GM12878 (cell line): ENCODE measurements at regions of chr5 and their contacts with region 1.

Region 1: DNA sequence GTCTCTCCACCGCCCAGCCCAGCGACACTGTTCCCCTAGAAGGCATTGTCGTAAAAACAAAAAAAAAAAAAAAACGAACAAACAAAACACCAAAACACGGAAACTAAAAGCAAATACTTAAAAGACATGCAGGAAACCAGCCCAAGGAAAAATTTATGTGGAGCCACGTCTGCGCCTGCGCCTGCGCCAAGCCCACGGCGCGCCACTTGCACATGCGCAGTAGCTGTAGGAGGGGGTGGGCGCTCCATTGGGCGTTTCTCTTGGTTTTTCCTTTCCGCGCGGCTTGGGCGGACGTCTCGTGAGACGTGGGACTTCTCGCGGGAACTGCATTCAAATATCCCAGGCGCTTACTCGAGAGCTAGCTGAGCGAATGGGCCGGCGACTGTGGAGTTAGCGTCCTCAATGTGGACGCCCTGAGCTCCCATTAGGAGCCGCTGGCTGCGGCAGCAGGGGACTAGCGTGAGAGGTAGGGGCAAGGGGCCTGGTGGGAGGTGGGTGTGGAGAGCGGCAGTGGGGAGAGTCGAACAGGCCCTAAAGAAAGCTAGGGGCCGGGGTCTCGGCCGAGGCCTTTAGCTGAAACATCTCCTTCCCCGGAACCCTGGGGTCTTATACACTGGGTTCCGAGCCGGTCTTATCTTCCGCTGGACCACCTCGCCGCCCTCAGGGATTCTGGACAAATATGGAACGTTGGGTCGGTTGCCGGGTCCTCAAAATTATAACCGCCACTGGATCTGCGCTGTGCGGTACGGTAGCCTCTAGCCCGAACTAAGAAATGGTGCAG is at the start of gene SPDL1:
- DNase-seq: peak; percentile 89
- ATAC-seq: peak; percentile 94
- H3K4me3 ChIP-seq: peak within 1 kb of the TSS; percentile 90
- H3K27ac ChIP-seq: peak within 1 kb of the TSS; percentile 88
- H3K4me1 ChIP-seq: no peaks in the 10 kb centered on the region; the same call in 1 of the 2 replicates
- H3K27me3 ChIP-seq: no peaks in the 10 kb centered on the region
- CTCF ChIP-seq: no peak
- EP300 ChIP-seq: no peak
- POLR2A ChIP-seq: peak; percentile 94
- RAD21 ChIP-seq: no peak
- polyA plus RNA-seq, gene SPDL1: 36.6 to 40.4 TPM

Region 2: DNA sequence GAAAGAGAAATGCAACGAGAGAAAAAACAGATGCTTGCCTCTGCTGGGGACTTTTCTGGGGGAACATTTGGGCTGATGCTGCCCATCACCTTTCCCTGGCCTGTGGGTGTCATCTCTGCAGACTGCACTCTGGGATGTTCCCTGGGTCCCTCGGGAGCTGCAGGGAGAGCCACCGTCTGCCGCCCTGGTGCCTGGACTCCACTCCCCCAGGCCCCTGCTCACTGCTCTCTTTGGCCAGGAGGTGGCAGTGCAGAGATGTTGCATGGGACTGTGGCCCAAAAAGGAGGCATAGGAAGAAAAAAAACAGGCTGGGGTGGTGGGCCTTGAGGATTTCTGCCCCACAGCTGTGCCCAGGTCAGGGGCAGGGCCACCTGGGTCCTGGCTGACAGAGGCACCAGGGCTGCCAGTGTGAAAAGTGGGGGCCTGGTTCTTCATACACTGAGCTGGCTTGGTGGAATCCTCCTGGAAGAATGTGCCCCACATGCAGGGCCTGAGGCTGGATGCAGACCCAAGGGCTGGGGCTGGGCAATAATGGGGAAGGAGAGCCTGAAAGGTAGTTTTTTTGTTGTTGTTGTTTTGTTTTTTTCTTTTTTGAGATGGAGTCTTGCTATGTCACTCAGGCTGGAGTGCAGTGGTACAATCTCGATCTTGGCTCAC is 636.3 kb before region 1 on chr5:
- CTCF ChIA-PET with region 1: interaction called, 6 read pairs
- POLR2A ChIA-PET with region 1: no interaction called
- RAD21 ChIA-PET with region 1: no interaction called
- SMC1A ChIA-PET with region 1: interaction called, 5 read pairs
- in situ Hi-C with region 1: no loop called
- intact Hi-C with region 1: loop called (anchors 1 kb)
- DNase-seq: no peak
- ATAC-seq: peak; percentile 89
- H3K4me3 ChIP-seq: no peak overlapping the region
- H3K27ac ChIP-seq: no peak overlapping the region
- H3K4me1 ChIP-seq: no peaks in the 10 kb centered on the region
- H3K27me3 ChIP-seq: no peaks in the 10 kb centered on the region
- CTCF ChIP-seq: peak; percentile 74 to 90 (median 84)
- EP300 ChIP-seq: no peak
- POLR2A ChIP-seq: no peak
- RAD21 ChIP-seq: peak; percentile 74

Region 3: GRCh38 chr5:169265888-169266287 is 317.7 kb before region 1 on chr5:
- CTCF ChIA-PET with region 1: interaction called, 3 read pairs
- POLR2A ChIA-PET with region 1: no interaction called
- RAD21 ChIA-PET with region 1: no interaction called
- SMC1A ChIA-PET with region 1: no interaction called
- in situ Hi-C with region 1: no loop called
- intact Hi-C with region 1: loop called (anchors 2 kb)
- DNase-seq: no peak
- ATAC-seq: no peak
- H3K4me3 ChIP-seq: no peak overlapping the region
- H3K27ac ChIP-seq: no peak overlapping the region
- H3K4me1 ChIP-seq: no peaks in the 10 kb centered on the region
- H3K27me3 ChIP-seq: no peaks in the 10 kb centered on the region; a peak in 1 of 4 replicates
- CTCF ChIP-seq: peak in 2 of 3 experiments; percentile 2 to 16; a peak in 2 of 6 replicates
- EP300 ChIP-seq: no peak
- POLR2A ChIP-seq: no peak
- RAD21 ChIP-seq: no peak

Region 4: DNA sequence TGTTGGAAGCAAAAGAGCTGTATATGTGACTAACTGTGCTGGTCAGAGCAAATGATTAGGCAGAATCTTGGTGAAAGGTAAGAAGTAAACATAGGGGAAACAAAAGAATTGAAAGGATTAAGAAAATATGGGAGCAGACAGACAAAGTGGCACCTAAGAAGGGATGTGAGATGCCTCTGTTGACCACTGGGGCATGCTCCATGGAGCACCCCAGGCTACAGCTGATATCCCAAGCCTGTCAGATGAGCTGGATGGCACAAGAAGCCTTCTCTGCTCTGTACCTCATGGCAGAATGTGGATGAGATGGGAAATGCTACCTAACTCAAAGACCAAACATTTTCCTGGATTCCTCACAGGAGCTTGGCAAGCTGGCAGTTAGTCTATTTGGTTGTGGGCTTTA is 193.3 kb before region 1 on chr5:
- CTCF ChIA-PET with region 1: no interaction called
- POLR2A ChIA-PET with region 1: no interaction called
- RAD21 ChIA-PET with region 1: no interaction called
- SMC1A ChIA-PET with region 1: no interaction called
- in situ Hi-C with region 1: no loop called
- intact Hi-C with region 1: no loop called
- DNase-seq: no peak
- ATAC-seq: no peak
- H3K4me3 ChIP-seq: no peak overlapping the region
- H3K27ac ChIP-seq: no peak overlapping the region
- H3K4me1 ChIP-seq: no peaks in the 10 kb centered on the region
- H3K27me3 ChIP-seq: no peaks in the 10 kb centered on the region
- CTCF ChIP-seq: no peak
- EP300 ChIP-seq: no peak
- POLR2A ChIP-seq: no peak
- RAD21 ChIP-seq: no peak

Region 5: GRCh38 chr5:169609716-169610115 is 26.1 kb after region 1 on chr5:
- CTCF ChIA-PET with region 1: no interaction called
- POLR2A ChIA-PET with region 1: no interaction called
- RAD21 ChIA-PET with region 1: interaction called, 8 read pairs
- SMC1A ChIA-PET with region 1: interaction called, 14 read pairs
- in situ Hi-C with region 1: no loop called
- intact Hi-C with region 1: no loop called
- DNase-seq: no peak
- ATAC-seq: no peak
- H3K4me3 ChIP-seq: no peak overlapping the region
- H3K27ac ChIP-seq: no peak overlapping the region
- H3K4me1 ChIP-seq: peaks cover 6% of the 10 kb centered on the region
- H3K27me3 ChIP-seq: no peaks in the 10 kb centered on the region
- CTCF ChIP-seq: no peak
- EP300 ChIP-seq: no peak
- POLR2A ChIP-seq: no peak
- RAD21 ChIP-seq: no peak

Region 6: GRCh38 chr5:169656125-169656901 is 72.7 kb after region 1 on chr5:
- CTCF ChIA-PET with region 1: interaction called, 9 read pairs
- POLR2A ChIA-PET with region 1: interaction called, 4 read pairs
- RAD21 ChIA-PET with region 1: interaction called, 5 read pairs
- SMC1A ChIA-PET with region 1: interaction called, 6 read pairs
- in situ Hi-C with region 1: no loop called
- intact Hi-C with region 1: loop called (anchors 5 kb)
- DNase-seq: peak; percentile 79
- ATAC-seq: peak; percentile 75
- H3K4me3 ChIP-seq: peak overlapping the region; percentile 40; the same call in 1 of the 2 replicates
- H3K27ac ChIP-seq: peak overlapping the region; percentile 88
- H3K4me1 ChIP-seq: peaks cover 60% of the 10 kb centered on the region
- H3K27me3 ChIP-seq: no peaks in the 10 kb centered on the region
- CTCF ChIP-seq: no peak
- EP300 ChIP-seq: peak; percentile 56 to 70; a peak in 3 of 4 replicates
- POLR2A ChIP-seq: no peak
- RAD21 ChIP-seq: peak; percentile 21; the same call in 1 of the 2 replicates